HepG2 (cell line): ENCODE measurements at regions of chr4 and their contacts with region 1.

Region 1: DNA sequence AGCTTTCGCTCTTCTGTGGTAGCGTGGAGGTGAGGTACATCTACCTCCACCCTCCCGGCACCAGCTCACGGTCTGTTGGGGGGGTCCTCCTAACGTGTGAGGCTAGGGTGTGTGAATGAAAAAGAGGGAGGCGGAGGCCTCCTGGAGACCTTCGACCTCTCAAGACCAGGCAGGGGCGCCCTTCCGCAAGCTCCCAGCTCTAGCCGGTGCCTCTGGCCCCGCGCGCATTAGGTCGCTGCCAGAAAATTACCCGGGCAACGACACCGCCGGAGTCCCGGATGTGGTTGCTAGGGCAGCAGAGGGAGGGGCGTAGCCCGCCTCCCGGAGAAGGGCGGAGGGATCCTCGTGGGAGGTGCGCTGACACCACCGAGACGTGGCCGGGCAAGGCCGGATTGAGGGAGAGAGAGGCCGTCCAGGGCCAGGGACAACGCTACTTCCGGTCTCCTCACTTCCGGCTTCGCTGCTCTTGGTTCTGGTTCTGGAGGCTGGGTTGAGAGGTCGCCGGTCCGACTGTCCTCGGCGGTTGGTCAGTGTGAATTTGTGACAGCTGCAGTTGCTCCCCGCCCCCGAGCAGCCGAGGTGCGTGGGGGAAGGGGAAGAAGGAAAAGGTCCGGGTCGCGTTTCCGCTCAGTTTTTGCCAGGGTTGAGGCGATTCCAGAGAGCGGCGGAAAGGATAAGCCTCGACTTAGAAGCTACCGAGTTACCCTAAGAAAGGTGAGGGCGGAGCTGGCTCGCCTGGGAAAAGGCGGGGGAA is at the starts of genes ARFIP1 and TIGD4:
- DNase-seq: peak; percentile 95
- ATAC-seq: peak; percentile 95
- H3K4me3 ChIP-seq: peak within 1 kb of the TSS; percentile 64 to 85 (median 65)
- H3K27ac ChIP-seq: peak within 1 kb of the TSS; percentile 75
- H3K4me1 ChIP-seq: peaks cover 36% of the 10 kb centered on the region
- H3K27me3 ChIP-seq: no peaks in the 10 kb centered on the region; a peak in 1 of 5 replicates
- CTCF ChIP-seq: peak; percentile 71
- EP300 ChIP-seq: peak in 1 of 2 experiments; percentile 24; a peak in 2 of 4 replicates
- POLR2A ChIP-seq: peak; percentile 66 to 86; a peak in 3 of 4 replicates
- RAD21 ChIP-seq: peak; percentile 57
- total RNA-seq, gene ARFIP1: 27.7 and 44.8 TPM in 2 replicates
- total RNA-seq, gene TIGD4: 0.49 and 0.62 TPM in 2 replicates

Region 2: GRCh38 chr4:152817331-152817730 is 37.6 kb after region 1 on chr4:
- CTCF ChIA-PET with region 1: no interaction called
- POLR2A ChIA-PET with region 1: no interaction called
- in situ Hi-C with region 1: no loop called
- intact Hi-C with region 1: loop called (anchors 5 kb)
- DNase-seq: no peak
- ATAC-seq: no peak
- H3K4me3 ChIP-seq: no peak overlapping the region
- H3K27ac ChIP-seq: no peak overlapping the region
- H3K4me1 ChIP-seq: peaks cover 20% of the 10 kb centered on the region
- H3K27me3 ChIP-seq: no peaks in the 10 kb centered on the region
- CTCF ChIP-seq: no peak
- EP300 ChIP-seq: no peak
- POLR2A ChIP-seq: no peak
- RAD21 ChIP-seq: no peak

Region 3: DNA sequence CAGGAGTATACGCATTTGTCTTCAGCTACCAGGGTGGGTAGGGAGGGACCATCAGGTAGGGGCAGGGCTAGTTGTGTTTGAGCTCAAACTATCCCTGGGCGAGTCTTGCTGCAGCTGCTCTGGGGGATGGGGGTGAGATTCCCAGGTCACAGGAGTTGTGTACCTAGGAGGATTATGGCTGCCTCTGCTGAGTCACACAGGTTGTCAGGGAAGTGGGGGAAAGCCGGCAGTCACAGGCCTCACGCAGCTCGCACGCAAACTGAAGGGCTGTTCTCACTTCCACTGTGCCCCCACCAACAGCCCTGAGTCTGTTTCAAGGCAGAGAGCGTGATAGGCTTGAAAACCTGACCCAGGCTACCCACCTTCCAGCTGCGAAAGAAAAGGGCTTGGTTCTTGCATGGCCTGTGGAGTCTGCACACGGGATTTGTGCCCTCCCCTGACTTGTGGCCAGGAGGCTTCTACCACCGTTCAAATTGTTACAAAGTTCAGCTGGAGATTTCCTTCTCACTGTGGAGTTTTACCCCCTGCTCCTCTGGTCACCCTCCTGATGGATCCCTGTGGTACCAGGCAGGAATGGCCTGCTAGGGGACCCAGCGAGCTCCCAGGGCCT is 63.9 kb after region 1 on chr4:
- CTCF ChIA-PET with region 1: no interaction called
- POLR2A ChIA-PET with region 1: no interaction called
- in situ Hi-C with region 1: no loop called
- intact Hi-C with region 1: no loop called
- DNase-seq: peak; percentile 10
- ATAC-seq: no peak
- H3K4me3 ChIP-seq: no peak overlapping the region
- H3K27ac ChIP-seq: peak overlapping the region; percentile 23
- H3K4me1 ChIP-seq: peaks cover 13% of the 10 kb centered on the region; the same call in 1 of the 2 replicates
- H3K27me3 ChIP-seq: no peaks in the 10 kb centered on the region
- CTCF ChIP-seq: no peak
- EP300 ChIP-seq: no peak
- POLR2A ChIP-seq: no peak
- RAD21 ChIP-seq: no peak

Region 4: GRCh38 chr4:152956650-152957436 is 177.2 kb after region 1 on chr4:
- CTCF ChIA-PET with region 1: no interaction called
- POLR2A ChIA-PET with region 1: no interaction called
- in situ Hi-C with region 1: no loop called
- intact Hi-C with region 1: loop called (anchors 10 kb)
- DNase-seq: peak; percentile 18
- ATAC-seq: peak; percentile 72
- H3K4me3 ChIP-seq: peak overlapping the region in 1 of 3 experiments; percentile 36; a peak in 2 of 6 replicates
- H3K27ac ChIP-seq: no peak overlapping the region
- H3K4me1 ChIP-seq: peaks cover 38% of the 10 kb centered on the region
- H3K27me3 ChIP-seq: no peaks in the 10 kb centered on the region
- CTCF ChIP-seq: no peak
- EP300 ChIP-seq: no peak
- POLR2A ChIP-seq: no peak
- RAD21 ChIP-seq: no peak

Region 5: DNA sequence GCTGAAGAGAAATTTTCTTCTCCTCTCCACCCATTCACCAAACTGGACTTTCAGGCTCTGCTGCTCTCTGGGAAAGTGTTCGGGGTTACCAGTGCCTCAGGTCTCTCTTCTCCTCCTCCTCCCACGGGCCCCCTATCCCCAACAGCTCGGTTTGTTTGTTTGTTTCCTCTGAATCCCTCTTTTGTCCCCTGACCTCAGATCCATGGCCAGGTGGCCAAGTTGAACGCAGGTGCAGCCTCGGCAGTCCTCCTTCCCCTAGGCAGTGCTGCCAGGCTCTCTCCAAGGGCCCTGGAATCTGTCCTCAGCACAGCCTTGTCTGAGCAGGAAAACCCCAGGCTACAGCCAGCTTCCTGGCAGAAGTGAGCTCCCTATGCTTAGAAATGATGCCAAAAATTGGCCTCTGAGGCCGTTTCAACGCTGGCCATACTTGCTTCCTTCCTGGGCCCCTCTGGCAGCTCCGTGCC is 216.4 kb after region 1 on chr4:
- CTCF ChIA-PET with region 1: no interaction called
- POLR2A ChIA-PET with region 1: no interaction called
- in situ Hi-C with region 1: no loop called
- intact Hi-C with region 1: no loop called
- DNase-seq: no peak
- ATAC-seq: no peak
- H3K4me3 ChIP-seq: no peak overlapping the region
- H3K27ac ChIP-seq: no peak overlapping the region
- H3K4me1 ChIP-seq: peaks cover 8% of the 10 kb centered on the region; the same call in 1 of the 2 replicates
- H3K27me3 ChIP-seq: peaks cover 5 to 38% of the 10 kb centered on the region in 2 experiments; a peak in 4 of 5 replicates
- CTCF ChIP-seq: no peak
- EP300 ChIP-seq: no peak
- POLR2A ChIP-seq: no peak
- RAD21 ChIP-seq: no peak